BJ (cell line): ENCODE measurements at regions of chr7 and their contacts with region 1.

Region 1: DNA sequence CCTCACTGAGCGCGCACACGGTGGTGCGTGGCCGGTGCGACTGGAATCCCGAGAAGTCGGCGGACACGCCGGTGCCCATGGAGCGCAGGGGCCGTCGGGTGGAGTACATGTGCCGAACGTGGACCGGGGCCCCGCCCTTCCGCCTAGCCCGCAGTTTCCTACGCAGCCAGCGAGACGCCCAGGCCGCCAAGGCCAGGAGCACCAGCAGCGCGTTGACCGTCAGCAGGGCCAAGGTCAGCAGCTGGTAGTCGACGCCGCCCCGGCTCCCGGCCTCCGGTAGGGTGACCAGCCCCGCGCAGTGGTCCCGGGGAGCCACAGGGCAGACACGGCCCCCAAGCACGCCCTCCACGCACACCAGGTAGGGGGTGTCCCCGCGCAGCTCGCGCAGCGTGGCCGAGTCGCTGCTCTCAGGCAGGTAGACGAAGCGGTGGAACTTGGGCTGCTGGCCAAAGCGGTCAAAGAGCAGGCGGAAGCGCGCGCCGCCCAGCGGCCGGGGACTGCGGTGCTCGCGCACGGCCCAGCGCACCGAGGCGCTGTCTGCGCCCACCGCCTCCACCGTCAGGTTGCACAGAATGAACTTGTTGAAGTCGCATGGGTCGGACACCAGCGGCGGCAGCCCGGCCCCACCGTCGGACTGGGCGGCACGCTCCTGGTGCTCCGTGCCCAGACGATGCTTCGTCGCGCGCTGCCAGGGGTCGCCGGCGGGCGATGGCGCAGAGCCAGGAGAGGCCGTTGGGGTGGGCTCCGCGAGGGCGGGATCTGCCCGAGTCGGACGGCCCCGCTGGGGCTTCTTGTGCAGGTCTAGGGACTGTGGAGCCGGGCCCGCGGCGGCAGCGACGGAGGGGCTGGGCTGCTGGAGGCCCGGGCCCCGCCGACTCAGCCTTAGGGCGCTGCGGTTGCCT is 2.2 kb downstream of the TRIL start:
- DNase-seq: no peak
- H3K4me3 ChIP-seq: no peak overlapping the region; the same call in 1 of the 2 replicates
- H3K27me3 ChIP-seq: peaks cover 38% of the 10 kb centered on the region
- CTCF ChIP-seq: peak; percentile 35; the same call in 1 of the 2 replicates

Region 2: DNA sequence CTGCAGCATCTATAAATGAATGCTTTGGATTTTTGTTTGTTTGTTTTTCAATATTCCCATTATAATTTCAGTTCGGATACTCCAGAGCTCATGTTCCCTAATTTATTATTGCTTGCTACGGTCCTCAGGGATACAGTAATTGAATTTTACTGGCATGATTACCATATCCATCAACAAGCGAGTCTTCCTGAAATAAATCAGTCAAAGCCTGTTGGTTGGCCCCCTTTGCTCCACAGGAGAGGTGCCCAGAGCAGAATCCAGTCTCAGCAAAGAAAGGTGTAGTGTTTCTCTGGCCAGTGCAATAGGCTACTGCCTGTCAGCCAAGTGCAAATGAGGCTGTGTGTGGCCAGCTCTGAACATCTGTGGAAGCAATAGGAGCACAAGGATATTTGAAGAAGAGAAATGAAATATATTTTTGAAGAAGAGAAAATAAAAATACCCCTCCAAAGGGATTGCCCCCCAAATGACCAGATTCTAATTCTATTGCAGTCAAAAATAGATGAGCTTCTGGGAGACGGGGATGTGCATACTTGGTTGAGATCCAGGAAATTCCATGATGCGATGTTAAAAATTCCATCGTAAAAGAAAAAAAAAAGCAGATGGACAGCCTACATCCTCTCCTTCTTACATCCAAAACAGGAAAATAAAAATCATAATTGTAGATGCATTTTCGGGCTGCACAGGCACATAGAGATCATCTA is 16.0 kb before region 1 on chr7:
- CTCF ChIA-PET with region 1: interaction called, 10 read pairs
- POLR2A ChIA-PET with region 1: no interaction called
- DNase-seq: no peak
- H3K4me3 ChIP-seq: no peak overlapping the region
- H3K27me3 ChIP-seq: peaks cover 5% of the 10 kb centered on the region
- CTCF ChIP-seq: no peak

Region 3: GRCh38 chr7:28984631-28985030 is 28.7 kb after region 1 on chr7:
- CTCF ChIA-PET with region 1: interaction called, 38 read pairs
- POLR2A ChIA-PET with region 1: no interaction called
- DNase-seq: peak; percentile 74
- H3K4me3 ChIP-seq: no peak overlapping the region
- H3K27me3 ChIP-seq: no peaks in the 10 kb centered on the region
- CTCF ChIP-seq: no peak

Region 4: DNA sequence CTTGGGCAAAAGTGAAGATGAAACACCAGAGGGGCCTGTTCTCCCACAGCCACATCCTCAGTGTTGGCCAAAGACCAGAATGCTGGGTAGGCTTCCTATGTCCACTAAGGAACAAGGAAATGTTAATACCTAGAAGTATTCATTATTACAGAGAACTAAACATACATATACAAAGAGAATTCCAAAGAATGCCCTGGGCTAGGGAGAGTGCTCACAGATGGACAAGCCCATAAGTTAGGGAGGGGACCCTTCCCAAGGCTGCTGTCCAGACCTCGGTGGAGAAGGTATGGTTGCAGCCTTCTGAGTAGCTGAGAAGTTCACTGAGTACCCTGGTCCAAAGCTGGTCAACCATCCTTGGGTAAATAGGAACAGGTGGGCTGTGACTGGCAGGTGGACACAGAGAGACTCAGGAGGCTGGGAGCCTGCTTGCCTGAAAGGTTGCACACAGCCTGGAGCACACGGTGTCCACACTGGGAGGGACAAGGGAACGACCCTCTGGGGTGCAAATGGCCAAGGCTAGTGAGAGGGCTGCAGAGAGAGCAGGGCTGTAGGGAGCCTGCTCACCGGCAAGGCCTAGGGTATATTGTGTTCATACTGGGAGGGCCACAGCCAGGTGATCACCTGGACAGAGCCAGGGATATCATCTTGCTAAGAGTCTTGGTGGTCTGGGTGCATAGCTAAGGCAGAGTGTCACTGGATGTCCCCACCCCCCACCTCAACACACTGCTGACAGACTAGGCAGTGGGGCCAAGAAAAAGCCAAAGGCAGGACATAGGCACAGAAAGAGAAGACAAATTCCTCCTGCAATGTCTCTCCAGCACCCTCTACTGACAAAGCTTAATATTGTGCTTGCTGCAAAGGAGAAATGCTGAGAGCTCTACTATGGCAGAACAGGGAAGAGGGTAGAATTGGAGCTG is 150.0 kb after region 1 on chr7:
- CTCF ChIA-PET with region 1: interaction called, 34 read pairs
- POLR2A ChIA-PET with region 1: no interaction called
- DNase-seq: no peak
- H3K4me3 ChIP-seq: no peak overlapping the region
- H3K27me3 ChIP-seq: peaks cover 2% of the 10 kb centered on the region
- CTCF ChIP-seq: peak; percentile 85